CD8-positive, alpha-beta T cell (primary cell): ENCODE measurements at regions of chr14 and their contacts with region 1.

Region 1: DNA sequence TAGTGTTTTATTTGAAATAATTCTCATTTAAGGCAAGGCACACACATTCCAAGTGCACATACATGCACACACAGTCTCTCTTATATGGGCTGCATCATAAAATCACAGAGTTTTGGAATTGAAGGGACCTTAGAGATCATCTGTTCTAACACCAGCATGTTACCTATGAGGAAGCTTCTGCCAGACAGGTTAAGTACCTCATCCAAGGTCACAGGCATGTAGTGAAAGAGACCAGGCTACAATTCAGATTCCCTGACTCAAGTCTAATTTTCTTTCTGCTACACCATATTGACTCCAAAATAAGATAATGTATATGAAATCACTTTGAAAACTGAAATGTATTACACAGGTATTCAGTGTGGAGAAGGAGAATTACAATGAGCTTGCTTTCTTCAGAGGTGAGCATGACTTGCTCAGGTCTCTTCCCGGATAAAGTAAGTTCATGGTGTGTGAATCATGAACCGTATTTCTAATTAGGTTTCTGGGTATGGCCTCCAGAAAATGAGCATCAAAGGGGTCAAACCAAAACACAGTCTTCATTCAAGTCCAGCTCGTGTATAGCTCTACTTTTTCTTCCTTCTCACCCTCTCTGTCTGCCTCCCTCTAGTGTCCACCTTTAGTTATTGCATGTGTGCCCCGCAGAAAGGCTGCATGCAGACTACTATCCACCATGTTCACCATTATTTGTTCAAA is 411.9 kb downstream of the FUT8 start:
- DNase-seq: peak; percentile 27 to 80 (median 59)
- ATAC-seq: peak; percentile 98
- H3K4me3 ChIP-seq: no peak overlapping the region
- H3K4me3 Mint-ChIP-seq: no peak overlapping the region
- H3K27ac ChIP-seq: no peak overlapping the region
- H3K27ac Mint-ChIP-seq: no peak overlapping the region
- H3K4me1 ChIP-seq: peaks cover 4% of the 10 kb centered on the region
- H3K4me1 Mint-ChIP-seq: peaks cover 15% of the 10 kb centered on the region
- H3K27me3 ChIP-seq: no peaks in the 10 kb centered on the region
- H3K27me3 Mint-ChIP-seq: no peaks in the 10 kb centered on the region
- CTCF ChIP-seq: peak; percentile 96

Region 2: GRCh38 chr14:65222440-65222858 is 602.0 kb before region 1 on chr14:
- CTCF ChIA-PET with region 1: interaction called, 8 read pairs
- POLR2A ChIA-PET with region 1: no interaction called
- intact Hi-C with region 1: loop called (anchors 2 to 5 kb)
- DNase-seq: peak; percentile 12 to 72 (median 53)
- ATAC-seq: peak; percentile 79
- H3K4me3 ChIP-seq: no peak overlapping the region
- H3K4me3 Mint-ChIP-seq: no peak overlapping the region
- H3K27ac ChIP-seq: no peak overlapping the region
- H3K27ac Mint-ChIP-seq: no peak overlapping the region
- H3K4me1 ChIP-seq: peaks cover 8% of the 10 kb centered on the region
- H3K4me1 Mint-ChIP-seq: peaks cover 18% of the 10 kb centered on the region
- H3K27me3 ChIP-seq: no peaks in the 10 kb centered on the region
- H3K27me3 Mint-ChIP-seq: no peaks in the 10 kb centered on the region
- CTCF ChIP-seq: peak; percentile 88

Region 3: GRCh38 chr14:65750906-65751305 is 73.5 kb before region 1 on chr14:
- CTCF ChIA-PET with region 1: no interaction called
- POLR2A ChIA-PET with region 1: no interaction called
- intact Hi-C with region 1: no loop called
- DNase-seq: no peak
- ATAC-seq: no peak
- H3K4me3 ChIP-seq: no peak overlapping the region
- H3K4me3 Mint-ChIP-seq: no peak overlapping the region
- H3K27ac ChIP-seq: no peak overlapping the region
- H3K27ac Mint-ChIP-seq: peak overlapping the region; percentile 46
- H3K4me1 ChIP-seq: peaks cover 5% of the 10 kb centered on the region
- H3K4me1 Mint-ChIP-seq: peaks cover 16% of the 10 kb centered on the region
- H3K27me3 ChIP-seq: no peaks in the 10 kb centered on the region
- H3K27me3 Mint-ChIP-seq: no peaks in the 10 kb centered on the region
- CTCF ChIP-seq: no peak

Region 4: GRCh38 chr14:65794674-65795279 is 29.7 kb before region 1 on chr14:
- CTCF ChIA-PET with region 1: interaction called, 13 read pairs
- POLR2A ChIA-PET with region 1: interaction called, 4 read pairs
- intact Hi-C with region 1: no loop called
- DNase-seq: no peak
- ATAC-seq: no peak
- H3K4me3 ChIP-seq: no peak overlapping the region
- H3K4me3 Mint-ChIP-seq: no peak overlapping the region
- H3K27ac ChIP-seq: no peak overlapping the region
- H3K27ac Mint-ChIP-seq: no peak overlapping the region
- H3K4me1 ChIP-seq: peaks cover 3% of the 10 kb centered on the region
- H3K4me1 Mint-ChIP-seq: no peaks in the 10 kb centered on the region
- H3K27me3 ChIP-seq: peaks cover 0 to 10% of the 10 kb centered on the region in 2 experiments
- H3K27me3 Mint-ChIP-seq: no peaks in the 10 kb centered on the region
- CTCF ChIP-seq: no peak

Region 5: GRCh38 chr14:65847075-65847847 is 22.8 kb after region 1 on chr14:
- CTCF ChIA-PET with region 1: interaction called, 44 read pairs
- POLR2A ChIA-PET with region 1: interaction called, 8 read pairs
- intact Hi-C with region 1: loop called in 1 of 2 experiments (anchors 1 kb)
- DNase-seq: peak; percentile 41 to 93 (median 70)
- ATAC-seq: peak; percentile 87
- H3K4me3 ChIP-seq: peak overlapping the region; percentile 13 to 21
- H3K4me3 Mint-ChIP-seq: peak overlapping the region; percentile 71
- H3K27ac ChIP-seq: peak overlapping the region; percentile 57 to 84
- H3K27ac Mint-ChIP-seq: peak overlapping the region; percentile 92
- H3K4me1 ChIP-seq: peaks cover 90% of the 10 kb centered on the region
- H3K4me1 Mint-ChIP-seq: peaks cover 85% of the 10 kb centered on the region
- H3K27me3 ChIP-seq: no peaks in the 10 kb centered on the region
- H3K27me3 Mint-ChIP-seq: no peaks in the 10 kb centered on the region
- CTCF ChIP-seq: no peak

Region 6: DNA sequence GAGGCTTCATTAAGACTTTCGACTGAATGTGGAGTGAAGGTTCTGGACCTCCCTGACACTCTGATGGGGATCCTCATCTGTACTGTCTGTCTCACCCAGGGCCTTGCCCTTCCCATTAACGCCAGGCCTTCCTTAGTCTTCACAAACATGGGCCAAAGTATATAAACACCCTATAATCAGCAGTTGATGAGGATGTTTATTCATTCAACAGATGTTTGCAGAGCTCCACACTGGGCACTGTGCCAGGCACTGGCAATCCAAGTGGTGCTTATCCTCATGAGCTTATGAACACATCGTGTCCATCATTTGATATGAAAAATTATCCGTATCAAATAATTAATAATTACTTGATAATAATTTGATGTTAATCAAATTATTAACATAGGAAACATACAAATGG is 42.5 kb after region 1 on chr14:
- CTCF ChIA-PET with region 1: interaction called, 9 read pairs
- POLR2A ChIA-PET with region 1: interaction called, 3 read pairs
- intact Hi-C with region 1: loop called in 1 of 2 experiments (anchors 5 kb)
- DNase-seq: no peak
- ATAC-seq: no peak
- H3K4me3 ChIP-seq: no peak overlapping the region
- H3K4me3 Mint-ChIP-seq: no peak overlapping the region
- H3K27ac ChIP-seq: no peak overlapping the region
- H3K27ac Mint-ChIP-seq: no peak overlapping the region
- H3K4me1 ChIP-seq: peaks cover 46% of the 10 kb centered on the region
- H3K4me1 Mint-ChIP-seq: peaks cover 44% of the 10 kb centered on the region
- H3K27me3 ChIP-seq: no peaks in the 10 kb centered on the region
- H3K27me3 Mint-ChIP-seq: no peaks in the 10 kb centered on the region
- CTCF ChIP-seq: no peak

Region 7: GRCh38 chr14:65927931-65928356 is 103.5 kb after region 1 on chr14:
- CTCF ChIA-PET with region 1: interaction called, 54 read pairs
- POLR2A ChIA-PET with region 1: interaction called, 7 read pairs
- intact Hi-C with region 1: no loop called
- DNase-seq: peak; percentile 41 to 84 (median 77)
- ATAC-seq: peak; percentile 89
- H3K4me3 ChIP-seq: no peak overlapping the region
- H3K4me3 Mint-ChIP-seq: peak overlapping the region; percentile 56
- H3K27ac ChIP-seq: peak overlapping the region; percentile 43 to 68
- H3K27ac Mint-ChIP-seq: peak overlapping the region; percentile 87
- H3K4me1 ChIP-seq: peaks cover 45% of the 10 kb centered on the region
- H3K4me1 Mint-ChIP-seq: peaks cover 55% of the 10 kb centered on the region
- H3K27me3 ChIP-seq: no peaks in the 10 kb centered on the region
- H3K27me3 Mint-ChIP-seq: no peaks in the 10 kb centered on the region
- CTCF ChIP-seq: no peak

Region 8: GRCh38 chr14:65958664-65959562 is 134.5 kb after region 1 on chr14:
- CTCF ChIA-PET with region 1: interaction called, 118 read pairs
- POLR2A ChIA-PET with region 1: interaction called, 3 read pairs
- intact Hi-C with region 1: loop called (anchors 2 to 5 kb)
- DNase-seq: peak in 2 of 9 experiments; percentile 55 to 69
- ATAC-seq: peak; percentile 57
- H3K4me3 ChIP-seq: no peak overlapping the region
- H3K4me3 Mint-ChIP-seq: no peak overlapping the region
- H3K27ac ChIP-seq: no peak overlapping the region
- H3K27ac Mint-ChIP-seq: no peak overlapping the region
- H3K4me1 ChIP-seq: peaks cover 19% of the 10 kb centered on the region
- H3K4me1 Mint-ChIP-seq: peaks cover 26% of the 10 kb centered on the region
- H3K27me3 ChIP-seq: no peaks in the 10 kb centered on the region
- H3K27me3 Mint-ChIP-seq: no peaks in the 10 kb centered on the region
- CTCF ChIP-seq: peak; percentile 83